Activated B cell treated with CpG ODN at 0.5 μM for 24 hours (primary cell): ENCODE measurements at regions of chr1 and their contacts with region 1.

Region 1: GRCh38 chr1:67214420-67215174 is 48.3 kb downstream of the IL23R start:
- DNase-seq: no peak
- ATAC-seq: peak; percentile 62
- H3K4me3 Mint-ChIP-seq: no peak overlapping the region
- H3K27ac Mint-ChIP-seq: no peak overlapping the region
- H3K4me1 Mint-ChIP-seq: peaks cover 9% of the 10 kb centered on the region
- H3K27me3 Mint-ChIP-seq: no peaks in the 10 kb centered on the region
- CTCF ChIP-seq: no peak

Region 2: GRCh38 chr1:66764994-66765578 is 449.5 kb before region 1 on chr1:
- CTCF ChIA-PET with region 1: interaction called, 6 read pairs
- POLR2A ChIA-PET with region 1: no interaction called
- intact Hi-C with region 1: loop called (anchors 1 kb)
- DNase-seq: no peak
- ATAC-seq: peak; percentile 25
- H3K4me3 Mint-ChIP-seq: no peak overlapping the region
- H3K27ac Mint-ChIP-seq: no peak overlapping the region
- H3K4me1 Mint-ChIP-seq: no peaks in the 10 kb centered on the region
- H3K27me3 Mint-ChIP-seq: no peaks in the 10 kb centered on the region
- CTCF ChIP-seq: no peak